CD4-positive, alpha-beta T cell (primary cell): ENCODE measurements at regions of chrX and their contacts with region 1.

Region 1: DNA sequence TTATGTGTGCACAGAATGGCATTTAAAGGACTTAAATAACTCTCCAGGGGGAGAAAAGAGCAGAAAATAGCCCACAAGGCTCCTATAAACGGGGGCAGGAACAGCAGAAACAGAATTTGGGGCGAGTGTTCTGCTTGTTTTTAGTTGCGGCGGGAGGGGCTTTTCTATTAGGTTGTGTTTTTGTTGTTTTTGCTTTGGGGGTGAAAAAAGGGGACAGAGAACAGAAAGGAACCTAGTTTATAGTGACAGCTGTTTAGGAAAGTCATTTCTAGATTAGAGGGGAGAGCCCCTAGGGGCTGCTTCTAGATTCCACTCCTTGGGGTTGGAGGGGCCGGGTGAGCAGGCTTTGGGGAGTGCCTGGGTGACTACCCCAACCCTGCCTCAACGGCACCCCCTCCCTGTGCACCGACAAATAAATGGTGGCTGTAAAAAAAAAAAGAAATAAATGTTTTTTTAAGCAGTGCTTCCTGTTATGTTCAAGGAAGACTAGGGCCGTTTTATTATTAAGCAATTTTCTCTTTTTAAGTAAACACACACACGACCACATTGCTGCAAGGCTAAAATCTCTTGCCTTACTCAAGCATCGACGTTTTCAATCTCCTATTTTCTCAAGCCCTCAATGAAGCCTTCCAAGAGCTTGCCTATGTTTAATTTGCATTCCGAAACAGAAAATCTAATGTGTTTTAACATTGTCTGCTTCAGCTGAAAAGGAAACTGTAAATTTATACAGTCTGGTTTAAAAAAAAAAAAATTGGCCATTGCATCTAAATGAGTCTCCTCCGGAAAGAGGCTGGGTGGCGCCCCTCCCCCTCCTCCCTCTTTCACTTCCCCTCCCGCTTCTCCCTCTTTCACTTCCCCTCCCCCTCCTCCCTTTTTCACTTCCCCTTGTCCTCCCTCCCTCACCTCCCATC is 123.3 kb upstream of the TBL1X start:
- DNase-seq: peak; percentile 27 to 83 (median 56)
- ATAC-seq: peak; percentile 48
- H3K4me3 ChIP-seq: peak overlapping the region; percentile 40
- H3K4me3 Mint-ChIP-seq: peak overlapping the region; percentile 78
- H3K27ac ChIP-seq: peak overlapping the region; percentile 60 to 83
- H3K27ac Mint-ChIP-seq: peak overlapping the region; percentile 95
- H3K4me1 ChIP-seq: peaks cover 38% of the 10 kb centered on the region
- H3K4me1 Mint-ChIP-seq: peaks cover 46% of the 10 kb centered on the region
- H3K27me3 ChIP-seq: no peaks in the 10 kb centered on the region
- H3K27me3 Mint-ChIP-seq: no peaks in the 10 kb centered on the region
- CTCF ChIP-seq: no peak

Region 2: GRCh38 chrX:8971116-8971515 is 370.4 kb before region 1 on chrX:
- CTCF ChIA-PET with region 1: no interaction called
- POLR2A ChIA-PET with region 1: interaction called, 8 read pairs
- intact Hi-C with region 1: loop called in 1 of 2 experiments (anchors 1 kb)
- DNase-seq: peak in 3 of 14 experiments; percentile 64 to 66 (median 65)
- ATAC-seq: peak; percentile 74
- H3K4me3 ChIP-seq: no peak overlapping the region
- H3K4me3 Mint-ChIP-seq: no peak overlapping the region
- H3K27ac ChIP-seq: no peak overlapping the region
- H3K27ac Mint-ChIP-seq: no peak overlapping the region
- H3K4me1 ChIP-seq: no peaks in the 10 kb centered on the region
- H3K4me1 Mint-ChIP-seq: no peaks in the 10 kb centered on the region
- H3K27me3 ChIP-seq: no peaks in the 10 kb centered on the region
- H3K27me3 Mint-ChIP-seq: peaks cover 2% of the 10 kb centered on the region
- CTCF ChIP-seq: peak; percentile 46

Region 3: DNA sequence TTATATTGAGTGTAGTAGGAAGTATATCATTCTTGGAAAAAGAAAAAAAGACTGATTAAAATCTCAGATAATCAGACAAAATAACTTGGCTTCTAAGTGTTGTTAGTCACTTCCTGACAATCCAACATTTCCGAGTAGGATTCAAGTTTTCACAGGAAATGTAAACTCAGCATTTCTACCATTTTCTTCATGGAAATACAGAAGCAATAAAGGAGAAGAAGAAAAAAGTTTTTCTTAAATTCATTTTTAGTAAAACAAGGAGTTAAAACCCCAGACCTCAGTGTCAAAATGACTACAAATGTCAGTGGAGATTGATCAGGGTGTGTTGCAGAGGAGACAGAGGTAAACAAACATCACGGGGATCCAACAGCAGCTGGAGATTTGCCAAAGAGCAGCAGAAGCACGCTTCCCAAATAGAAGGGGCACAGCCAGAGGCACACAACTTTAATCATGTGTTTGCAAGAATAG is 178.3 kb before region 1 on chrX:
- CTCF ChIA-PET with region 1: no interaction called
- POLR2A ChIA-PET with region 1: interaction called, 4 read pairs
- intact Hi-C with region 1: loop called (anchors 2 to 5 kb)
- DNase-seq: no peak
- ATAC-seq: no peak
- H3K4me3 ChIP-seq: no peak overlapping the region
- H3K4me3 Mint-ChIP-seq: no peak overlapping the region
- H3K27ac ChIP-seq: no peak overlapping the region
- H3K27ac Mint-ChIP-seq: no peak overlapping the region
- H3K4me1 ChIP-seq: no peaks in the 10 kb centered on the region
- H3K4me1 Mint-ChIP-seq: peaks cover 21% of the 10 kb centered on the region
- H3K27me3 ChIP-seq: no peaks in the 10 kb centered on the region
- H3K27me3 Mint-ChIP-seq: no peaks in the 10 kb centered on the region
- CTCF ChIP-seq: no peak

Region 4: DNA sequence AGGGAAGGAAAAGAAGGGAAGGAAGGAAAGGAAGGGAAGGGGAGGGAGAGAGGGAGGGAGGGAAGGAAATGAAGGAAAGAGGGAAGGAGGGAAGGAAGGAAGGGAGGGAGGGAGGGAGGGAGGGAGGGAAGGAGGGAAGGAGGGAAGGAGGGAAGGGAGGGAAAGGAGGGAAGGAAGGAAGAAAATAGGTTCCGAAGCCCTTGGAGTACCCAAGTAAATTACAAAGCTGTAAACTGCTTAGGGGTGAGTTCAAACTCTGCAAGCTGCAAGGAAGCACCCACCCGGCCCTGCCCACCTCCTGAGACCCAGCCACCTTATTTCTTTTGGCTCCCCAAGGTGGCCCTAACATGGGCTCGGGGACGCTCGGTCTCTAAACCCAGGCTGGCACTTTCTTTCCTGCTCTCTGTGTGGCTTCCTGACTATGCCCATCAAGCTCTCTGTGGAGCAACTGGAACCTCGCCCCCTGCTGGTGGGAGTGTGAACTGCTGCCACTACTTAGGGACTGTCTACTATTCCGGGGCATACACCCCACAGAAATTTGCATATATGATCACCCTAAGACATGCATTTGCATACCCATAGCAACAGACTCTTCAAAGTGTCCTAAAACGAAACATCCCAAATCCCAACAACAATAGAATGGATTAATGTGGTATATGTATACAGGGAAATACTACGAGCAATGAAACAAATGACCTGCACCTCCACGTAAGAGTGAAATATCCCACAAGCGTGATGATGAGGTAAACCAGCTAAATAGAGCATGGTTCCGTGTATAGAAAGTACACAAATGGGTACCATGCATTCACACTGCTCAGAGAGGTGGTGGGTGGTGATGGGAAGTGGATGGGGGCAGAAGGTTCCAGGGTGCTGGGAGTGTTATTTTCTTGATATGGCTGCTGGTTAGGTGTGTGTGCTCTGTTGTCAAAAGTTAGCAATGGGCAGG is 28.4 kb before region 1 on chrX:
- CTCF ChIA-PET with region 1: interaction called, 9 read pairs
- POLR2A ChIA-PET with region 1: interaction called, 5 read pairs
- intact Hi-C with region 1: loop called in 1 of 2 experiments (anchors 2 kb)
- DNase-seq: peak; percentile 54 to 85 (median 70)
- ATAC-seq: peak; percentile 71
- H3K4me3 ChIP-seq: no peak overlapping the region
- H3K4me3 Mint-ChIP-seq: no peak overlapping the region
- H3K27ac ChIP-seq: no peak overlapping the region
- H3K27ac Mint-ChIP-seq: no peak overlapping the region
- H3K4me1 ChIP-seq: peaks cover 12% of the 10 kb centered on the region
- H3K4me1 Mint-ChIP-seq: peaks cover 15% of the 10 kb centered on the region
- H3K27me3 ChIP-seq: no peaks in the 10 kb centered on the region
- H3K27me3 Mint-ChIP-seq: no peaks in the 10 kb centered on the region
- CTCF ChIP-seq: peak; percentile 61

Region 5: GRCh38 chrX:9352694-9353411 is 11.3 kb after region 1 on chrX:
- CTCF ChIA-PET with region 1: interaction called, 6 read pairs
- POLR2A ChIA-PET with region 1: interaction called, 5 read pairs
- intact Hi-C with region 1: loop called in 1 of 2 experiments (anchors 1 kb)
- DNase-seq: peak in 5 of 14 experiments; percentile 6 to 68 (median 59)
- ATAC-seq: no peak
- H3K4me3 ChIP-seq: peak overlapping the region; percentile 28
- H3K4me3 Mint-ChIP-seq: peak overlapping the region; percentile 36
- H3K27ac ChIP-seq: no peak overlapping the region
- H3K27ac Mint-ChIP-seq: peak overlapping the region; percentile 84
- H3K4me1 ChIP-seq: peaks cover 28% of the 10 kb centered on the region
- H3K4me1 Mint-ChIP-seq: peaks cover 34% of the 10 kb centered on the region
- H3K27me3 ChIP-seq: no peaks in the 10 kb centered on the region
- H3K27me3 Mint-ChIP-seq: no peaks in the 10 kb centered on the region
- CTCF ChIP-seq: no peak

Region 6: DNA sequence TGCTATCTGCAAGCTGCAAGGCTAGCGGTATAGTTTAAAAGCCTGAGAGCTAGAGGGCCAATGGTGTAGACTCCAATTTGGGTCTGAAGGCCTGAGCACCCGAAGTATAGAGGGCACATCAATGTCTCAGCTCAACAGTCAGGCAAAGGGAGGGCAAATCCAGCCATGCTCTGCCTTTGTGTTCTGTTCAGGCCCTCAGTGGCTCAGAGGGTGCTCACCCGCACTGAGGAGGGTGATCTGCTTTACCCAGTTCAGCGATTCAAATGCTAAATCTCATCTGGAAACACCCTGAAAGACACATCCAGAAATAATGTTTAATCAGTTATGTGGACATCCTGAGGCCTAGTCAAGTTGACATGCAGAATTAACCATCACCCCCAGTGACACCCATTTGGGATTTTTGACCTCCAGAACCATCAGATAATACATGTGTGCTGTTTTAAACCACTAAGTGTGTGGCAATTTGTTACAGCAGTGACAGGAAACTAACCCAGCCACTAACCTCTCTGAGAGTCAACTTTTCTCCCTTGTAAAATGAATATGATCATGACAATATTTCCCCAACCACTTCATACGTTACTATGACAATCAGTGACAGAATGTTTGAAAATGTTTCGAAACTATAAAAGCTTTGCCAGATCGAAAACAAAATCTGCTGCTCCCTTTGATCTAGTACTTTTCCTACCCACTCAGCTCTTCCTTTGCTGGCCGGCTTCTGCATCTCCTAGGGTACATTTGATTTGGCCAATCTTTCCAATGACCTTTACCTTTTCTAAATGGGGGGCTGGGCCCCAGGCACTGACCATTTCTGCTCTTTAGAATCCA is 114.9 kb after region 1 on chrX:
- CTCF ChIA-PET with region 1: no interaction called
- POLR2A ChIA-PET with region 1: interaction called, 13 read pairs
- intact Hi-C with region 1: no loop called
- DNase-seq: peak in 6 of 14 experiments; percentile 16 to 83 (median 54)
- ATAC-seq: peak; percentile 89
- H3K4me3 ChIP-seq: no peak overlapping the region
- H3K4me3 Mint-ChIP-seq: peak overlapping the region; percentile 61
- H3K27ac ChIP-seq: peak overlapping the region; percentile 75 to 80
- H3K27ac Mint-ChIP-seq: peak overlapping the region; percentile 96
- H3K4me1 ChIP-seq: peaks cover 32% of the 10 kb centered on the region
- H3K4me1 Mint-ChIP-seq: peaks cover 35% of the 10 kb centered on the region
- H3K27me3 ChIP-seq: no peaks in the 10 kb centered on the region
- H3K27me3 Mint-ChIP-seq: no peaks in the 10 kb centered on the region
- CTCF ChIP-seq: no peak